ENCODE measurements at regions of chr11 and their contacts with region 1.

Region 1: GRCh38 chr11:15074206-15075161 is 1.1 kb downstream of the CALCB start:
- DNase-seq: peak; percentile 93 to 98 (median 93)
- ATAC-seq: peak; percentile 91
- H3K4me3 ChIP-seq: no peak overlapping the region
- H3K27ac ChIP-seq: peak overlapping the region in 3 of 4 donors; percentile 41 to 54 (median 51)
- H3K4me1 ChIP-seq: peaks cover 23% of the 10 kb centered on the region
- H3K27me3 ChIP-seq: no peaks in the 10 kb centered on the region
- CTCF ChIP-seq: peak; percentile 67 to 87 (median 81)
- POLR2A ChIP-seq: peak in 1 of 3 donors; percentile 29

Region 2: GRCh38 chr11:14713496-14714244 is 360.8 kb before region 1 on chr11:
- intact Hi-C with region 1: no loop called
- DNase-seq: no peak
- ATAC-seq: no peak
- H3K4me3 ChIP-seq: no peak overlapping the region
- H3K27ac ChIP-seq: no peak overlapping the region
- H3K4me1 ChIP-seq: no peaks in the 10 kb centered on the region
- H3K27me3 ChIP-seq: no peaks in the 10 kb centered on the region
- CTCF ChIP-seq: no peak
- POLR2A ChIP-seq: no peak

Region 3: GRCh38 chr11:14789879-14790484 is 284.5 kb before region 1 on chr11:
- intact Hi-C with region 1: loop called (anchors 10 kb)
- DNase-seq: no peak
- ATAC-seq: no peak
- H3K4me3 ChIP-seq: no peak overlapping the region
- H3K27ac ChIP-seq: no peak overlapping the region
- H3K4me1 ChIP-seq: peaks cover 4% of the 10 kb centered on the region
- H3K27me3 ChIP-seq: no peaks in the 10 kb centered on the region
- CTCF ChIP-seq: peak in 6 of 7 experiments; percentile 30 to 59 (median 52)
- POLR2A ChIP-seq: no peak

Region 4: DNA sequence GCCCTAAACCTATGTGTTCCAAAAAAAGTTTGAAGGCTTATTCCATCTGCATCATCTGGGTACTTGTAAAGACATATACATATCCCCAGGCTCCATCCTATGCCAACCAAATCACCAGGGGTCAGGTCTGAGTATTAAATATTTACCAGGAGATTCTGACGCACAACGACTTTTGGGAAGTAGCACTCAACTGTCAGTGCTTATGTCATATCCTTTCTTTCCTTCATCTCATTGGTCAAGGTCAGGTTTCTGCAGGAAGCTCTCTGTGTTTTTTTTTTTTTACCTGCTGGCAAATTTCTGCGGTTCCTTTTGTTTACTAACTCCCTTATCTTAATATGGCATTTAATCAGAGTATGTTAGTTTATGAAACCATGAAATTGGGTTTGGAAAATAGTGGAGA is 159.9 kb before region 1 on chr11:
- intact Hi-C with region 1: loop called (anchors 10 kb)
- DNase-seq: no peak
- ATAC-seq: no peak
- H3K4me3 ChIP-seq: no peak overlapping the region
- H3K27ac ChIP-seq: no peak overlapping the region
- H3K4me1 ChIP-seq: no peaks in the 10 kb centered on the region
- H3K27me3 ChIP-seq: no peaks in the 10 kb centered on the region
- CTCF ChIP-seq: no peak
- POLR2A ChIP-seq: no peak

Region 5: DNA sequence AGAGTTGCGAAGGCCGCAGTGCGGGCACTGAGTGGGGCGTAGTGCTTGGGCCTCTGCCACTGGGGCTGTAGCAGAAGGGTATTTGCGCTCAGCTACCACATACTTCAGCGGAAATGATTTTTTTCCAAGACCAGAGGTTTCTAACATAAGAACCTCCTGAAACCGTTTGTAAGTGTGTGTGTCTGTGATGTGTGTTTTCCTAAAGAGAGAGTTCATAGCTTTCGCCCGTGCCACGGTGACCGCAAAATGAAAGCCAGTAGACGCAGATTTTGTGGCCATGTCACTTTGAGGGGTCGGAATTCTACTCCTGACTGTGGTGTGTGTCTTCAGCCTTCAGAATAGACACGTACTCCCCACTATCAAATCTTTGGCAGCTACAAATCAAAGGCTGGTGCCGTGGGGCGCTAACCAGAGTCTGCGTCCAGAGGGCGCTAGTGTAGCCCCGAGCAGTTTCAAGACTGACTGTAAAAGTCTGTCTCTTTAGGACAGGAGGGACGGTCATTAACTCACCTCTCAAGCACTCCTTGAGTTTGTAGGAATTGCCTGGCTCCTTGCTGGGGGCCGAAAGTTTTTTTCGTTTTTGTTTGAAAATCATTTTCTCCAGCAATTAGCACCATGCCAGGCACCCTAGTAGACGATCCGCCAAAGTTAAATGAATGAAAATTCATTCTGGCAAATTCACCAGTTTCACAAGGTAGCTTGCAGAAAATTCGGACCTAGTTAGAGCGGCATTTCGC is 99.8 kb before region 1 on chr11:
- intact Hi-C with region 1: loop called (anchors 10 kb)
- DNase-seq: peak; percentile 53 to 68 (median 59)
- ATAC-seq: peak; percentile 61
- H3K4me3 ChIP-seq: no peak overlapping the region
- H3K27ac ChIP-seq: no peak overlapping the region
- H3K4me1 ChIP-seq: peaks cover 40% of the 10 kb centered on the region
- H3K27me3 ChIP-seq: no peaks in the 10 kb centered on the region
- CTCF ChIP-seq: peak; percentile 53 to 63 (median 57)
- POLR2A ChIP-seq: no peak

Region 6: GRCh38 chr11:15145615-15146014 is 71.1 kb after region 1 on chr11:
- intact Hi-C with region 1: no loop called
- DNase-seq: no peak
- ATAC-seq: peak; percentile 38
- H3K4me3 ChIP-seq: no peak overlapping the region
- H3K27ac ChIP-seq: no peak overlapping the region
- H3K4me1 ChIP-seq: peaks cover 3% of the 10 kb centered on the region
- H3K27me3 ChIP-seq: no peaks in the 10 kb centered on the region
- CTCF ChIP-seq: no peak
- POLR2A ChIP-seq: no peak